ENCODE measurements at regions of chr3 and their contacts with region 1.

Region 1: GRCh38 chr3:51391075-51391567 is at the start of gene RBM15B:
- H3K4me3 Mint-ChIP-seq: peak within 1 kb of the TSS; percentile 81
- H3K27ac Mint-ChIP-seq: peak within 1 kb of the TSS; percentile 81
- H3K4me1 Mint-ChIP-seq: peaks cover 88% of the 10 kb centered on the region
- H3K27me3 Mint-ChIP-seq: no peaks in the 10 kb centered on the region

Region 2: DNA sequence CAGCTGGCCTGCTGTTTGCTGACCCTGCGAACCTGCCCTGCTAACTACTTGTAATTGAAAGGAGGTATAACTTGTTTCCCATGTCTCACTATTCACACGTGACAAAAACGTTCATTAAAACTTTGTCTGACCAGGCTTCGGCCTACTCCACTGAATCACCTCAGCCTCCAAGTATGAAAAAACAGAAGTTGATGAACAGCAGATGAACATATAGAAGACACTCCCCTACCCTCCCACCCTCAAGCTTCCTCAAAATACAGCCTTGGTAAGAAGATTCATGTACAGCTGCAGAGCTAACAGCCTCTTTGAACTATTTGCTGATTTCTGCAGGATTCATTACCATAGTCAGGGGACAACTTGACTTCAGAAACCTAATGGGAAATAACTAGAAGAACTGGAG is 10.6 kb after region 1 on chr3:
- intact Hi-C with region 1: loop called (anchors 1 kb)
- H3K4me3 Mint-ChIP-seq: peak overlapping the region; percentile 30
- H3K27ac Mint-ChIP-seq: peak overlapping the region; percentile 76
- H3K4me1 Mint-ChIP-seq: peaks cover 61% of the 10 kb centered on the region
- H3K27me3 Mint-ChIP-seq: no peaks in the 10 kb centered on the region

Region 3: GRCh38 chr3:51434746-51435327 is 43.7 kb after region 1 on chr3:
- intact Hi-C with region 1: loop called (anchors 1 kb)
- H3K4me3 Mint-ChIP-seq: no peak overlapping the region
- H3K27ac Mint-ChIP-seq: no peak overlapping the region
- H3K4me1 Mint-ChIP-seq: peaks cover 7% of the 10 kb centered on the region
- H3K27me3 Mint-ChIP-seq: no peaks in the 10 kb centered on the region